Activated naive CD4-positive, alpha-beta T cell treated with anti-CD3 and anti-CD28 coated beads for 36 hours (primary cell): ENCODE measurements at regions of chr13 and their contacts with region 1.

Region 1: GRCh38 chr13:46184277-46184699 is 2.3 kb upstream of the LCP1 start:
- DNase-seq: peak; percentile 88
- H3K4me3 Mint-ChIP-seq: peak overlapping the region; percentile 72
- H3K27ac Mint-ChIP-seq: peak overlapping the region; percentile 98
- H3K4me1 Mint-ChIP-seq: peaks cover 25% of the 10 kb centered on the region
- H3K27me3 Mint-ChIP-seq: no peaks in the 10 kb centered on the region

Region 2: GRCh38 chr13:45055198-45055901 is 1128.9 kb before region 1 on chr13:
- CTCF ChIA-PET with region 1: no interaction called
- intact Hi-C with region 1: no loop called
- DNase-seq: peak; percentile 86
- H3K4me3 Mint-ChIP-seq: no peak overlapping the region
- H3K27ac Mint-ChIP-seq: no peak overlapping the region
- H3K4me1 Mint-ChIP-seq: peaks cover 30% of the 10 kb centered on the region
- H3K27me3 Mint-ChIP-seq: peaks cover 23% of the 10 kb centered on the region

Region 3: DNA sequence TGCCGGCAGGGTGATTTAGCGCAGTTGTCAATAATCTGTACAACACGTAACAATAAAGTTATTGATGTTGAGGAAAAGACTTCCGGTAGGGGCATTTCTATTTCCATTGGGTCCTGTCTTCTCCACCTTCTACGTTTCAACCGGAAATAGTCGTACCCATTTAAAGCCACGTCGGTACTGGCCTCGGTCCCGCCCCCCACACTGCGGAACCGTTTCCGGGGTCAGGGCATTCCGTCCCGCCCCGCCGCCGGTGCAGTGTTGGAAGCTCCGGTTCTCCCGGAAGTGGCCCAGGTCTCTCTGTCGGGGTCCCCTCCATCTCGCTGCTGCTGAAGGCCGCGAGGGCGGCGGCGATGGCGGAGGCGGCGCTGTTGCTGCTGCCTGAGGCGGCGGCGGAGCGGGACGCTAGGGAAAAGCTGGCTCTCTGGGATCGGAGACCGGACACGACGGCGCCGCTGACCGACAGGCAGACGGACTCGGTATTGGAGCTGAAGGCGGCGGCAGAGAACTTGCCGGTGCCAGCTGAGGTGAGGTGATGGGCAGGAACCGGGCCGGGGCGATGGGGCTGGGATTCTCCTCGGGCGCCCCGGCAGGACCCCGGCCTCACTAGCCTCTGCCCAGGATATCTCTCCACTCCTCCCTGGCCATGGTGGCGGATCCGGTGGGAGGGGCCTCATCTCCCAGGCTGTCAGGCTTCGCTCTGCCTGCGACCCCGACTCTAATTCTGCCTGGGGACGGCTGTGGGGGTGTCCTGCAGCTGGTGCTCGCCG is 719.4 kb before region 1 on chr13 and contains the start of gene COG3:
- CTCF ChIA-PET with region 1: no interaction called
- intact Hi-C with region 1: loop called (anchors 5 kb)
- DNase-seq: peak; percentile 97
- H3K4me3 Mint-ChIP-seq: peak within 1 kb of the TSS; percentile 88
- H3K27ac Mint-ChIP-seq: peak within 1 kb of the TSS; percentile 92
- H3K4me1 Mint-ChIP-seq: peaks cover 59% of the 10 kb centered on the region
- H3K27me3 Mint-ChIP-seq: no peaks in the 10 kb centered on the region
- total RNA-seq, gene COG3: 19.1 to 19.3 TPM

Region 4: DNA sequence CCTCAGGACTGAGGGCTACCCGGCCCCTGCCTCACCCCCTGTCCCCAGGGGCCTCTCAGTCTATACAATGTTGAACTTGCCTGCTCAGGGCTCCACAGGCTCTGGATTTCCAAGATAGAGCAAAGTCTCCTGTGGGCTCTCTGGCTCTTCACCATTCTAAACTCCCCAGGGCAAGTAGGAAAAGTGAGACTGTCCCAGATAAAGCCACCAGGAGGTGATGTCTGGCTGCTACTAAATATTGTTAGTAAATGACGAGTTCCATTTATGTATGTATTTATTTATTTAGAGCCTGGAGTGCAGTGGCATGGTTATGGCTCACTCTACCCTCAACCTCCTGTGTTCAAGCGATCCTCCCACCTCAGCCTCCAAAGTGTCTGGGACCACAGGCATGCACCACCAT is 259.1 kb before region 1 on chr13:
- CTCF ChIA-PET with region 1: no interaction called
- intact Hi-C with region 1: loop called (anchors 1 kb)
- DNase-seq: peak; percentile 16
- H3K4me3 Mint-ChIP-seq: no peak overlapping the region
- H3K27ac Mint-ChIP-seq: no peak overlapping the region
- H3K4me1 Mint-ChIP-seq: no peaks in the 10 kb centered on the region
- H3K27me3 Mint-ChIP-seq: no peaks in the 10 kb centered on the region

Region 5: GRCh38 chr13:46149272-46150133 is 34.8 kb before region 1 on chr13:
- CTCF ChIA-PET with region 1: interaction called, 3 read pairs
- intact Hi-C with region 1: loop called (anchors 1 kb)
- DNase-seq: peak; percentile 81
- H3K4me3 Mint-ChIP-seq: no peak overlapping the region
- H3K27ac Mint-ChIP-seq: peak overlapping the region; percentile 89
- H3K4me1 Mint-ChIP-seq: peaks cover 51% of the 10 kb centered on the region
- H3K27me3 Mint-ChIP-seq: no peaks in the 10 kb centered on the region

Region 6: GRCh38 chr13:46202188-46202795 is 18.0 kb after region 1 on chr13:
- CTCF ChIA-PET with region 1: interaction called, 4 read pairs
- intact Hi-C with region 1: loop called (anchors 1 kb)
- DNase-seq: no peak
- H3K4me3 Mint-ChIP-seq: no peak overlapping the region
- H3K27ac Mint-ChIP-seq: peak overlapping the region; percentile 48
- H3K4me1 Mint-ChIP-seq: peaks cover 34% of the 10 kb centered on the region
- H3K27me3 Mint-ChIP-seq: no peaks in the 10 kb centered on the region

Region 7: GRCh38 chr13:46295491-46296114 is 111.3 kb after region 1 on chr13:
- CTCF ChIA-PET with region 1: interaction called, 5 read pairs
- intact Hi-C with region 1: loop called (anchors 1 kb)
- DNase-seq: peak; percentile 76
- H3K4me3 Mint-ChIP-seq: peak overlapping the region; percentile 61
- H3K27ac Mint-ChIP-seq: peak overlapping the region; percentile 94
- H3K4me1 Mint-ChIP-seq: peaks cover 59% of the 10 kb centered on the region
- H3K27me3 Mint-ChIP-seq: no peaks in the 10 kb centered on the region

Region 8: DNA sequence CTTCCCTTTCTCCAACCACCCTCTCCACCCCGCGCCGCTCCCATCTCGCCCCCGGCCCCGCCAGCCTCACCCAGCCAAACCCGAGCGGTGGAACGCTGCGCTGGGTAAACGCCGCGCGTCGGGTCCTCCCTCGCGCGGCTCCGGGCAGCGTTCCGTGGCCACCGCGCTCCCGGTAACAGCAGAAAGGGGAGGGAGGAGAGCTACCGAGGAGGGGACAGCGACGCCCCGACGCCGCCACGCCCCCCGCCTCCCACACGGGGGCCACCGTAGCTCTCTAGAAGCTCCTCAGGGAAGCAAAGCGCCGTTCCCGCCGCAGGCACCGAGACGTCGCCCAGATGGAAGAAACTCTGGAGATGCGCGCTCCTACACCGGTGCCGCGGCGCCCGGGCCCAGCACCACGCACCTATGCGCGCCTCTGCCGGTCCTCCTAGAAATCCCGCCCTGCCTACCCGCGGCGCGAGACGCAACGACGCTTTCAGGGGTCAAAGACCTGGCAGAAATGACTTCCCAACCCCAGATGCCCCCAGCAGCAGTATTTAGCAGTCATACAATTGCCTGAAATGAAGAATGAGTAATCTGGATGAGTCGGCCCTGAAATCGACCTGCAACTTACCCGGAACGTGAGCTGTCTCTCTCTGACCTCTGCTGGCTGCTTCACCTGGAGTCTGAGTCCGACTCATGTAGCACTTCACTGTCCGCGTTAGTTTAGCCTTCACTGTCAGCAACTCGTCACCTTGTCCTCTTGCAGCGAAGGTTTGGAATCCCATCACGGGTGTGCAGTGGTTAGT is 203.0 kb after region 1 on chr13 and contains the start of gene RUBCNL:
- CTCF ChIA-PET with region 1: no interaction called
- intact Hi-C with region 1: loop called (anchors 2 kb)
- DNase-seq: peak; percentile 77
- H3K4me3 Mint-ChIP-seq: peak within 1 kb of the TSS; percentile 77
- H3K27ac Mint-ChIP-seq: no peak within 1 kb of the TSS
- H3K4me1 Mint-ChIP-seq: peaks cover 22% of the 10 kb centered on the region
- H3K27me3 Mint-ChIP-seq: peaks cover 28% of the 10 kb centered on the region
- total RNA-seq, gene RUBCNL: 3.6 to 3.7 TPM